Heart right ventricle (tissue), 16 donors: ENCODE measurements at regions of chr3 and their contacts with region 1.

Region 1: DNA sequence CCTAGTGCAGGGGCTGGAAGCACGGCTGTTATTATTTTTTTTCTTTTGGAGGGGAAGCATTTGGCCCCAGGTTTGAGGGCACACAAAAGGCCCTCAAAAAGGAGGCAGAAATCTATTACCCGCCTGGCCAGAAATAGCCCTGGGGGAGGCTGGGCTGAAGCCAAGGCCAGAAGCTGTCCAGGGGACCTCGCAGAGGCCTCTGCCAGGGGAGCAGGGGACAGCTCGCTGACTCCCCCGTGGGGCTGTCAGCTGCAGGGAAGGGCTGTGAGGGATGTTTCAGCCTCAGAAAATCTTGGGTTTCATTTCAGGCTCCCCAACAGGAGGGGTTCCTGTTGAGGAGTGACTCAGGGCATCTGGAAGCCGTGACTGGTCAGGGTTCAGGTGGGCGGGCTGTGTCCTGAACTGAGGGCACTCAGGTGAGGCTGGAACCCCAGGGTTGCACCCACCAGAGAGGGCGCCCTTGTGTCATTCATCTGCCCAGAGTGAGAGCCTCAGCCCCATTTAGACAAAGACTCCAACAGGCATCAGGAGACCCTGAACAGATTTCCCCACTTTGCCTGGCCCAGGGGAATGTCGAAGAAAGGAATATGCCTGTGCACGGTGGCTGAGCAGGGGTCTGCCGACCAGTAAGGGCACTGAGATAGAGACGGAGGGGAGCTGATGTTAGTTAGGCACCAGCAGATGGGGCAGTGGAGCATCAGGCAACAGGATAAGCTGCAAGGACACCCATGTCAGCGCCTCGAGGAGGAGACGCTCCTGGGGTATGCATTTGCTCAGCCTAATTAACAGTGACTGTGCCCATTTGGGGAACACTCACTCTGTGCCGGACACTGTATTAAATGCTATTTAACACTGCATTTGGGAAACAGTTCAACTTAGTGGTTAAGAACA is 43.5 kb upstream of the SLC6A11 start:
- DNase-seq: no peak
- ATAC-seq: no peak
- H3K4me3 ChIP-seq: no peak overlapping the region
- H3K27ac ChIP-seq: no peak overlapping the region
- H3K4me1 ChIP-seq: no peaks in the 10 kb centered on the region
- H3K27me3 ChIP-seq: peaks cover 0 to 56% (median 38%) of the 10 kb centered on the region in 7 donors
- CTCF ChIP-seq: peak in 3 of 9 donors; percentile 14 to 20 (median 19)

Region 2: GRCh38 chr3:10876661-10877060 is 104.1 kb after region 1 on chr3:
- intact Hi-C with region 1: loop called in 1 of 10 experiments (anchors 10 kb)
- DNase-seq: no peak
- ATAC-seq: no peak
- H3K4me3 ChIP-seq: no peak overlapping the region
- H3K27ac ChIP-seq: no peak overlapping the region
- H3K4me1 ChIP-seq: no peaks in the 10 kb centered on the region
- H3K27me3 ChIP-seq: peaks cover 0 to 41% (median 21%) of the 10 kb centered on the region in 7 donors
- CTCF ChIP-seq: no peak

Region 3: GRCh38 chr3:10992017-10992941 is 219.8 kb after region 1 on chr3 and contains the start of gene SLC6A1:
- intact Hi-C with region 1: no loop called
- DNase-seq: peak; percentile 26 to 39
- ATAC-seq: peak; percentile 51 to 91 (median 78)
- H3K4me3 ChIP-seq: peak within 1 kb of the TSS; percentile 14 to 56 (median 50)
- H3K27ac ChIP-seq: peak within 1 kb of the TSS in 6 of 10 donors; percentile 48 to 70 (median 58)
- H3K4me1 ChIP-seq: peaks cover 0 to 20% (median 3%) of the 10 kb centered on the region in 9 donors
- H3K27me3 ChIP-seq: peaks cover 0 to 68% (median 52%) of the 10 kb centered on the region in 7 donors
- CTCF ChIP-seq: peak in 5 of 9 donors; percentile 24 to 50 (median 42)
- total RNA-seq, gene SLC6A1: 0.55 to 2.5 (median 1.7) TPM